ENCODE measurements at regions of chr12 and their contacts with region 1.

Region 1: DNA sequence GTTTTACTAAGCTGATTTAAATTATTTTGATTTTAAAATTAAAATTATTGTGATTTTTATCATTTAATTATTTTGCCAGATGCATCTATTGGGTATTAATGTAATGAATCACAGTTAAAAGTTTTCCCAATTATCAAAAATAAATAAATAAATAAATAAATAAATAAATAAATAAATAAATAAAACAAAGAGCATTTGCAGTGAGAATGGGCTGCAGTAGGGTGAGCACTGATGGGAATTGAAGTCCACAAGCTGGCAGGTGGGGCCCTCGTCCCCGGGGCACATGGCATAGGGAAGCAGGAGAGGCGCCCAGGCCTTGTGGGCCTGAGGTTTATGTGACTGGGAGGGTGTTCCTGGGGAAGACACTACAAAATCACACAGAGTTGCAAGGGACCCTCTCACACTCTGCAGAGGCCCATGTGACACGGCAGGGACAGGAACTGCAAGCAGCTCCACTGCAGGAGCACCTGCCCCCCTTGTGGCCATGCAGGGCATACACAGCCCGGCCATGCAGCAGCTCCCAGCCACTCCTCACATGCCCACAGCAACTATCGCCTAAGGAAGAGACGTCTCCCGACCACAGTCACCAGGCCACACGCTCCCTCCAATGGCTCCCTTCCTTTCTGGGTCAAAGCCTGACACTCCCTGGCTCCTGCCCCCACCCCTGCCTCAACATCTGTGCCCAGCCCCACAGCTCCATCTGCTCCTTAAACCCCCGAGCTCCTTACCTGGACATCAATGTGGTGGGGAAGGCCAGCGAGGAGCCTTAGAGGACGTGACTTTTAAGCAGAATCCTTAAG is 256.3 kb upstream of the SFSWAP start:
- DNase-seq: peak; percentile 76
- ATAC-seq: peak; percentile 98
- H3K4me3 ChIP-seq: no peak overlapping the region
- H3K27ac ChIP-seq: no peak overlapping the region; the same call in 1 of the 2 replicates
- H3K4me1 ChIP-seq: peaks cover 2 to 13% of the 10 kb centered on the region in 2 experiments; a peak in 2 of 4 replicates
- H3K27me3 ChIP-seq: 0 out of 2 replicates have a peak, but pooled peaks cover 5% of the 10 kb centered on the region
- CTCF ChIP-seq: peak; percentile 75 to 91 (median 82)
- POLR2A ChIP-seq: no peak
- RAD21 ChIP-seq: peak; percentile 84

Region 2: DNA sequence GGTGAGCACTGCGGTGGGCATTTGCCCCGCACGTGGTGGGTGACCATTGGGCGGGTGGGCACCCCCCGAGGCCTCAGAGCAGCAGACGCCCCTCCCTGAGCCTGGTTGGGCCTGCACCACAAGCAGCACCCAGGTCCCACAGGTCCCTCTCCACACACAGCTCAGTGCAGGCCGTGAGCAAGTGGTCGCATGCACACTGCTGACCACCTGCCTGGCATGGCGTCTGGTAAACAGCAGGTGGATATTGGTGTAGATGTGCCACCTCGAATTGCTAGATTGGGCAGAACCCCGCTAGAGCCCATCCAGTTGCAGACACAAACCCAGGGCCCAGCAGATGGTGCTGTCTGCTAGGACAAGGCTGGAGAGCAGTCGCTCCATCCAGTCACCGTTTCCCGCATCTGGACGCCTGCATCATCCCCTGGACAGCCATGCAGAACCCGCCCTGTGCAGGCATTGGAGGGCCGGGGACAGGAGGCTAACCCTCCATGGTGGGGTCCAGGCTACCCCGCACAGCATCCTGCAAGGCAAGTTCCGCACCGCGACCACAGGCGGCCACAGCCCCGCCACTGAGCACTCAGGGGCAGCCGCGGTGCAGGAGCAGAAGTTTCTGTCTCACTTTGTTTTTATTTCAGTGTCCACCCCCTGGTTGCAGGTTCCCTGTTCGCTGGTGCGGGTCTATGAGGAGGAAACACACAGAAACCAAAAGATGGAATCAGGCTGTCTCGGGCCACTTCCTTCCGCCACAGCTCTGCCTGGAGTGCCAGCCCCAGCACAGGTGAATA is 692.9 kb before region 1 on chr12:
- CTCF ChIA-PET with region 1: no interaction called
- POLR2A ChIA-PET with region 1: no interaction called
- RAD21 ChIA-PET with region 1: no interaction called
- intact Hi-C with region 1: loop called (anchors 5 kb)
- DNase-seq: peak; percentile 29
- ATAC-seq: peak; percentile 72
- H3K4me3 ChIP-seq: no peak overlapping the region
- H3K27ac ChIP-seq: no peak overlapping the region
- H3K4me1 ChIP-seq: no peaks in the 10 kb centered on the region
- H3K27me3 ChIP-seq: no peaks in the 10 kb centered on the region
- CTCF ChIP-seq: peak; percentile 49 to 55 (median 52); a peak in 5 of 6 replicates
- POLR2A ChIP-seq: no peak
- RAD21 ChIP-seq: peak; percentile 86

Region 3: DNA sequence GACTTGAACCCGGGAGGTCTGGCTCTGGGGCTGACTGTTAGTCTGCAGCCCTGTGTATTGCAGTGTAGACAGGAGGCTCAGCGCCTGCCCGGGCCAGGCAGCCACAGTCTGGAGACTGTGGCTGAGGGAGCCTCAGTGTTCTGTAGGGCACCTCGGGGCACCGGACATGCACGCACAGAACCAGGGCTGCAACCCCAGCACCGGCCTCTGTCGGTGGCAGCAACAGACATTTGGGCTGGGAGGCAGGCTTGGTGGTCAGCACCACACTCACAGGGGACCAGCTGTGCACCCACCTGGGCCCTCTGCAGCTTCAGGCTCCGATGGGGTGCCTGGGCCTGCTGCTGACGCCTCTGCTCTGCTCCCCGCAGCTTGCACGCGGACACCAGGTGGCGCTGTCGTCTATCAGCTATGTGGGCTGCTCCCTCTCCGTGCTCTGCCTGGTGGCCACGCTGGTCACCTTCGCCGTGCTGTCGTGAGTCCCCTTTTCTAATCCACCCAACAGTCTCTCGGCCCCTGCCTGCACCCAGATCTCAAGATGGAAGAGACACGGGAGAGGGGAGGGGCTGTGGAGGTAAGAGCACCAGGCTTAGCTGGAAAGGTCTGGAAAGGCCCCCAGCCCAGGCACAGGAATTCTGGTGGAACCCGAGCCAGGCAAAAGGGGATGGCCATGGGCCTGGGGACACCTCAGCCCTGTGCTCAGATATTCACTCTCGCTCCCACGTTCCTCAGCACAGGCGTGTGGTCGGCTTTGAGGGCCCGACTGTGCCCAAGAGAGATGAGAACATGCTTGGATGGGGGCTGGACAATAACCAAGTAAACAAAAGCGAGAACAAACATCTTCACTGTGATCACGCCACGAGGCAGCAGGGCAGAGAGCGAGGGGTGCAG is 349.9 kb before region 1 on chr12:
- CTCF ChIA-PET with region 1: interaction called, 43 read pairs
- POLR2A ChIA-PET with region 1: no interaction called
- RAD21 ChIA-PET with region 1: interaction called, 6 to 8 read pairs
- intact Hi-C with region 1: loop called (anchors 1 kb)
- DNase-seq: peak; percentile 64
- ATAC-seq: peak; percentile 99
- H3K4me3 ChIP-seq: no peak overlapping the region
- H3K27ac ChIP-seq: no peak overlapping the region
- H3K4me1 ChIP-seq: 0 out of 4 replicates have a peak, but pooled peaks cover 0 to 5% of the 10 kb centered on the region in 2 experiments
- H3K27me3 ChIP-seq: no peaks in the 10 kb centered on the region; the same call in 1 of the 2 replicates
- CTCF ChIP-seq: peak; percentile 89 to 96 (median 95)
- POLR2A ChIP-seq: no peak
- RAD21 ChIP-seq: peak; percentile 95

Region 4: DNA sequence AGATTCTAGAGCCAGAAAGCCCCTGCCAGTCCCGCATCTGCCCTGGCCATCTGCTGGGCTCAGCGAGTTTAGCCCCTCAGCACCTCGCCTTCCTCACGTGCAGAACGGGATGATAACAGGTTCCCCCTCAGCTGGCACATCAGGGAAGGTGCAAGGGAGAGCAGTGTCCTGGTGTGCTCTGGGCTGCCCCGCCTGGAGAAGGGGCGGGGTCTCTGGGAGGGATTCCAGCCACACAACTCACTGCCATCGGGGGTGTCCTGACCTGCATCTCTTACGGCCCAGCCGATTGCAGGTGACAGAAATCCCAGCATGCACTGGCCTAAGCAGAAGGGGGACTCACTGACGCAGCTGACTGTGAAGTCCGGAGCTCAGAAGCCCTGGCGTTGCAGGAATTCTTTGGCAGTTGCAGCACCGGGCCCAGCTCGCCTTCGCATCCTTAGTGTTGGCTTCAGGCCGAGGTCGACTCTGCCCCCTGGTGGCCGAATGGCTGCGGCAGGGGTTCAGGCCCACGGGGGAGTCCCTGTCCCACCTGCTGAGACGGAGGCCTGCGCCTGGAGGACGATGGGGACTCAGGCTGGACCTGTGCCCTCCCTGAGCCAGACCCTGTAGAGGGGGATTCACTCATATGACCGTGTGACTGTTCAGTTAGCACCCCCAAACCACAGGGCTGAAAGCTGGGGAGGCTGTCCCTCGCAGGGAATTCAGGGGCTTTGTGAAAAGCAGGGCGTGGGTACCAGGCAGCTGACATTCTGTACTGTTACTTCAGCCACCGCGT is 322.3 kb before region 1 on chr12:
- CTCF ChIA-PET with region 1: interaction called, 21 read pairs
- POLR2A ChIA-PET with region 1: no interaction called
- RAD21 ChIA-PET with region 1: no interaction called
- intact Hi-C with region 1: no loop called
- DNase-seq: peak; percentile 47
- ATAC-seq: peak; percentile 88
- H3K4me3 ChIP-seq: peak overlapping the region in 1 of 2 experiments; percentile 22; a peak in 2 of 4 replicates
- H3K27ac ChIP-seq: no peak overlapping the region
- H3K4me1 ChIP-seq: peaks cover 4 to 19% of the 10 kb centered on the region in 2 experiments; a peak in 3 of 4 replicates
- H3K27me3 ChIP-seq: no peaks in the 10 kb centered on the region
- CTCF ChIP-seq: peak; percentile 75 to 90 (median 81)
- POLR2A ChIP-seq: no peak
- RAD21 ChIP-seq: peak; percentile 74

Region 5: GRCh38 chr12:131327521-131328488 is 126.8 kb before region 1 on chr12:
- CTCF ChIA-PET with region 1: interaction called, 10 read pairs
- POLR2A ChIA-PET with region 1: no interaction called
- RAD21 ChIA-PET with region 1: interaction called, 3 to 6 read pairs
- intact Hi-C with region 1: no loop called
- DNase-seq: no peak
- ATAC-seq: peak; percentile 73
- H3K4me3 ChIP-seq: no peak overlapping the region
- H3K27ac ChIP-seq: no peak overlapping the region
- H3K4me1 ChIP-seq: no peaks in the 10 kb centered on the region
- H3K27me3 ChIP-seq: no peaks in the 10 kb centered on the region
- CTCF ChIP-seq: peak in 2 of 3 experiments; percentile 6 to 22; a peak in 1 of 6 replicates
- POLR2A ChIP-seq: no peak
- RAD21 ChIP-seq: peak; percentile 12; the same call in 1 of the 2 replicates

Measured in HCT116 (cell line).